ENCODE measurements at regions of chr7 and their contacts with region 1.

Region 1: GRCh38 chr7:118590107-118590506 is 365.6 kb downstream of the ANKRD7 start:
- DNase-seq: no peak
- ATAC-seq: no peak
- H3K4me3 ChIP-seq: no peak overlapping the region
- H3K27ac ChIP-seq: no peak overlapping the region
- H3K4me1 ChIP-seq: no peaks in the 10 kb centered on the region
- H3K27me3 ChIP-seq: no peaks in the 10 kb centered on the region
- CTCF ChIP-seq: no peak

Region 2: GRCh38 chr7:120221666-120222065 is 1631.6 kb after region 1 on chr7:
- intact Hi-C with region 1: loop called in 1 of 2 experiments (anchors 5 kb)
- DNase-seq: no peak
- ATAC-seq: no peak
- H3K4me3 ChIP-seq: no peak overlapping the region
- H3K27ac ChIP-seq: no peak overlapping the region
- H3K4me1 ChIP-seq: no peaks in the 10 kb centered on the region
- H3K27me3 ChIP-seq: no peaks in the 10 kb centered on the region
- CTCF ChIP-seq: no peak